Activated naive CD4-positive, alpha-beta T cell treated with anti-CD3 and anti-CD28 coated beads for 36 hours (primary cell): ENCODE measurements at regions of chrX and their contacts with region 1.

Region 1: DNA sequence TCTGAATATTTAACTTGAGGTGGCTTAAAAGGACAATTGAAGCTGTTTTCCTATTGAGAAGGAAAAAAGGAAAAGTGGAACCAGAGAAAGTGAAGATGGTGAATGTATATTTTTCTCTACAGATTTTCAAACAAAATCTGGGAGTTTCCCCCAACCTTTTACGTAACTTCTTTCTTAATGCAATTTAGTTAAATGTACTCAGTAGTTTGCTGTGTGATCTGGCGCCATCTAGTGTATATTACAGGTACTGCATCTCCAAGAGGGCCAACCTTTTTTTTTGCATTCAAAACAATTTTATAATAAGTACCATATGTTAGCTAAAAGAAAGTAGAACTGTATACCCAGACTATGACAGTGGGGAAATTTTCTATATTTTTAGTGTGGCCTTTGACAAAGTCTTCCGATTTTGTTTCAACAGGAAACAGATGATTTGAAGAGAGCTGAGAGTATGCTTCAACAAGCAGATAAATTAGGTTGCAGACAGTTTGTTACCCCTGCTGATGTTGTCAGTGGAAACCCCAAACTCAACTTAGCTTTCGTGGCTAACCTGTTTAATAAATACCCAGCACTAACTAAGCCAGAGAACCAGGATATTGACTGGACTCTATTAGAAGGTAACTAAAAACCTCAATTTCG is 82.0 kb downstream of the PLS3 start:
- DNase-seq: peak; percentile 41
- H3K4me3 Mint-ChIP-seq: no peak overlapping the region
- H3K27ac Mint-ChIP-seq: no peak overlapping the region
- H3K4me1 Mint-ChIP-seq: no peaks in the 10 kb centered on the region
- H3K27me3 Mint-ChIP-seq: no peaks in the 10 kb centered on the region

Region 2: DNA sequence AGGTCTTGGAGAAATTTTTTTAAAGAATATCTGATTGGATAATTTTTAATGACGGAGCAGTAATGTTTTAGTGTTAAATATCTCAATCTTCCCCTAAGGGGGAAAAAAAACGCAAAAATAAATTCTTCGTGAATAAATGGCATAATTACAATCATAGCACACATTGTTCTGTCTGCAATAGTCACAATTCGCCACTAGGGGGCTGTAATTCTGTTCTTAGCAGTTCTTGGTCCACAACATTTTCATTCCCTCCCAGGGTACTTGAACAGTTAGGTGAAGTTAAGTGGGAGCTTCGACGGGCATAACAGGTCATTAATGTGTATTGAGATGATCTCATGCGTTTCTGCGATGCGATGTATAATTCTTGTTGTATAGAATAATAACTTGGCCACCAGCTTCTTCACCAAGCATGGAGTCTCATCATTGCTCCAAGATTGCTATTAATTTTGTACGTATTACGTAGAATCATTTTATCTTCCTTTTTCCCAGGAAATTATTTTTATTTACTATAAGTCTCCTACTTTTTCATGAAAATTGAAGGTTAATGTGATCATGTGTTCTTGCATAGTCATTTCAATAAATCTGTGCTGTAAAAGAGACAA is 1031.9 kb before region 1 on chrX:
- CTCF ChIA-PET with region 1: no interaction called
- intact Hi-C with region 1: loop called (anchors 2 kb)
- DNase-seq: peak; percentile 16
- H3K4me3 Mint-ChIP-seq: no peak overlapping the region
- H3K27ac Mint-ChIP-seq: no peak overlapping the region
- H3K4me1 Mint-ChIP-seq: no peaks in the 10 kb centered on the region
- H3K27me3 Mint-ChIP-seq: no peaks in the 10 kb centered on the region

Region 3: GRCh38 chrX:114717921-114718320 is 925.1 kb before region 1 on chrX:
- CTCF ChIA-PET with region 1: no interaction called
- intact Hi-C with region 1: no loop called
- DNase-seq: no peak
- H3K4me3 Mint-ChIP-seq: no peak overlapping the region
- H3K27ac Mint-ChIP-seq: no peak overlapping the region
- H3K4me1 Mint-ChIP-seq: no peaks in the 10 kb centered on the region
- H3K27me3 Mint-ChIP-seq: no peaks in the 10 kb centered on the region

Region 4: DNA sequence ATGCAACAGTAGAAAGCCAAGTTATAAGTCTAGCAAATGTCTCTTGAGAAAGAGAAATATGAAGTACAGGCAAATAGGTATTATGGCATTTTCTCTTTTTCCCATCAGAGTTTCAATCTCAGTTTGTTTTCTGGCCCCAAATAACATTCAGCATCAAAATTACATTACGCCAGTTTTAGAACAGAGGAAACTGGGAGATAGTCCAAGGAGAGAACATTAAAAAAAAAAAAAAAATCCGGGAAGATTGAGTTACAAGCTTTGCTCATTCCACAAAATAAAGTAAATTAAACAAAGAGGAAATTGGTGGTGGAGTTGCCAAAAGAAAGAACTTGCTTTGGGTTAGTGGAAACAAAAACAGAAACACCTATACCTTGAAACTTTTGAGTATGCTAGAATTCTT is 575.2 kb before region 1 on chrX:
- CTCF ChIA-PET with region 1: no interaction called
- intact Hi-C with region 1: no loop called
- DNase-seq: no peak
- H3K4me3 Mint-ChIP-seq: no peak overlapping the region
- H3K27ac Mint-ChIP-seq: no peak overlapping the region
- H3K4me1 Mint-ChIP-seq: no peaks in the 10 kb centered on the region
- H3K27me3 Mint-ChIP-seq: no peaks in the 10 kb centered on the region

Region 5: GRCh38 chrX:115330498-115331168 is 312.4 kb before region 1 on chrX:
- CTCF ChIA-PET with region 1: interaction called, 20 read pairs
- intact Hi-C with region 1: loop called (anchors 1 kb)
- DNase-seq: peak; percentile 17
- H3K4me3 Mint-ChIP-seq: no peak overlapping the region
- H3K27ac Mint-ChIP-seq: no peak overlapping the region
- H3K4me1 Mint-ChIP-seq: no peaks in the 10 kb centered on the region
- H3K27me3 Mint-ChIP-seq: no peaks in the 10 kb centered on the region